Activated CD8-positive, alpha-beta T cell treated with anti-CD3 and anti-CD28 coated beads for 36 hours (primary cell): ENCODE measurements at regions of chr20 and their contacts with region 1.

Region 1: GRCh38 chr20:37534401-37535157 is 6.9 kb upstream of the BLCAP start:
- DNase-seq: peak; percentile 63
- ATAC-seq: peak; percentile 95
- H3K4me3 Mint-ChIP-seq: no peak overlapping the region
- H3K27ac Mint-ChIP-seq: no peak overlapping the region
- H3K4me1 Mint-ChIP-seq: peaks cover 3% of the 10 kb centered on the region
- H3K27me3 Mint-ChIP-seq: no peaks in the 10 kb centered on the region
- CTCF ChIP-seq: peak; percentile 87

Region 2: GRCh38 chr20:37202267-37202943 is 332.2 kb before region 1 on chr20:
- CTCF ChIA-PET with region 1: interaction called, 10 read pairs
- POLR2A ChIA-PET with region 1: no interaction called
- intact Hi-C with region 1: loop called (anchors 5 kb)
- DNase-seq: peak; percentile 35
- ATAC-seq: no peak
- H3K4me3 Mint-ChIP-seq: no peak overlapping the region
- H3K27ac Mint-ChIP-seq: no peak overlapping the region
- H3K4me1 Mint-ChIP-seq: peaks cover 3% of the 10 kb centered on the region
- H3K27me3 Mint-ChIP-seq: no peaks in the 10 kb centered on the region
- CTCF ChIP-seq: peak; percentile 70

Region 3: DNA sequence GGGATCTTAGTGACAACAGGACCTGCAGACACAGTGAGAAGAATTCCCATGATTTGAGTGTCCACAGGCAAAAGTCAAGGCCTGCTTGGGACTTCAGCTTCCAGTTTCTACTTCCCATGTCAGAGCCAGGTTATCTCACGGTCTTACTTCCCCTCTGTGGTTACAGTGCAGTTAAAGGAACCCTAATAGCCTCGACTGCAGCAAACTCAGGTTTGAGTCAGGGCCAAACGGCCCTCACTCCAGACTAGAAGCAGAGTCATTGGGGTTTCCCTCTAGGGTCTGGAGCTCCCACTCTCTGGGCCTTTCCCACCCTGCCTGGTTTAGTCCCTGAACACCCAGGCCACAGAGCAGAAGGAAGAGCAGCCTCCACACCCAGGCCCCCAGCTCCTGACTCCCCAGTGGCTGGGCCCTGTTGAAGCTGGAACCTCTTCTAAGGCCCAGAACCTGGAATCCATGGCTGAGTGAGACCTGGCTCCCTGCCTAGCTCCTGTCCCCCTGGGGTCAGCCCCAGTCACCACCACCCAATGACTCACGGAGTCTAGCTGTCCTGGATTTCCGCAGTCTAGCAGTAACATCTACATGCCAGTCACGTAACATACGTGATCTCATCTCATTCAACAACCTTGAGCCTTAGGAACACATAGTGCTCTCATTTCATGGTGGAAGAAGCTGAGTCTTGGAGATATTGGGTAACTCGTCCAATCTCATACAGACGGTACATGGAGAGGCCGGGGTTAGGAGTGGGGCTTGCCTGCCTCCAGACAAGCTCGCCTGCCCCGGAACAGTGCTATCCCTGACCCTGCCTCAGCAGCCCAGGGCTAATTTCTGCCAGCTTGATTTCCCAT is 263.8 kb before region 1 on chr20:
- CTCF ChIA-PET with region 1: interaction called, 43 read pairs
- POLR2A ChIA-PET with region 1: interaction called, 3 read pairs
- intact Hi-C with region 1: loop called (anchors 5 kb)
- DNase-seq: no peak
- ATAC-seq: no peak
- H3K4me3 Mint-ChIP-seq: no peak overlapping the region
- H3K27ac Mint-ChIP-seq: no peak overlapping the region
- H3K4me1 Mint-ChIP-seq: no peaks in the 10 kb centered on the region
- H3K27me3 Mint-ChIP-seq: no peaks in the 10 kb centered on the region
- CTCF ChIP-seq: no peak

Region 4: GRCh38 chr20:37384683-37385174 is 149.8 kb before region 1 on chr20:
- CTCF ChIA-PET with region 1: interaction called, 11 read pairs
- POLR2A ChIA-PET with region 1: no interaction called
- intact Hi-C with region 1: loop called (anchors 10 kb)
- DNase-seq: peak; percentile 81
- ATAC-seq: peak; percentile 96
- H3K4me3 Mint-ChIP-seq: peak overlapping the region; percentile 49
- H3K27ac Mint-ChIP-seq: peak overlapping the region; percentile 63
- H3K4me1 Mint-ChIP-seq: peaks cover 12% of the 10 kb centered on the region
- H3K27me3 Mint-ChIP-seq: peaks cover 5% of the 10 kb centered on the region
- CTCF ChIP-seq: peak; percentile 93

Region 5: GRCh38 chr20:37392421-37393178 is 142.0 kb before region 1 on chr20:
- CTCF ChIA-PET with region 1: interaction called, 24 read pairs
- POLR2A ChIA-PET with region 1: no interaction called
- intact Hi-C with region 1: loop called (anchors 10 kb)
- DNase-seq: peak; percentile 53
- ATAC-seq: peak; percentile 78
- H3K4me3 Mint-ChIP-seq: no peak overlapping the region
- H3K27ac Mint-ChIP-seq: no peak overlapping the region
- H3K4me1 Mint-ChIP-seq: no peaks in the 10 kb centered on the region
- H3K27me3 Mint-ChIP-seq: no peaks in the 10 kb centered on the region
- CTCF ChIP-seq: peak; percentile 25

Region 6: GRCh38 chr20:37494796-37495195 is 39.8 kb before region 1 on chr20:
- CTCF ChIA-PET with region 1: no interaction called
- POLR2A ChIA-PET with region 1: no interaction called
- intact Hi-C with region 1: no loop called
- DNase-seq: no peak
- ATAC-seq: no peak
- H3K4me3 Mint-ChIP-seq: no peak overlapping the region
- H3K27ac Mint-ChIP-seq: no peak overlapping the region
- H3K4me1 Mint-ChIP-seq: no peaks in the 10 kb centered on the region
- H3K27me3 Mint-ChIP-seq: no peaks in the 10 kb centered on the region
- CTCF ChIP-seq: no peak